ENCODE measurements at regions of chr19 and their contacts with region 1.

Region 1: DNA sequence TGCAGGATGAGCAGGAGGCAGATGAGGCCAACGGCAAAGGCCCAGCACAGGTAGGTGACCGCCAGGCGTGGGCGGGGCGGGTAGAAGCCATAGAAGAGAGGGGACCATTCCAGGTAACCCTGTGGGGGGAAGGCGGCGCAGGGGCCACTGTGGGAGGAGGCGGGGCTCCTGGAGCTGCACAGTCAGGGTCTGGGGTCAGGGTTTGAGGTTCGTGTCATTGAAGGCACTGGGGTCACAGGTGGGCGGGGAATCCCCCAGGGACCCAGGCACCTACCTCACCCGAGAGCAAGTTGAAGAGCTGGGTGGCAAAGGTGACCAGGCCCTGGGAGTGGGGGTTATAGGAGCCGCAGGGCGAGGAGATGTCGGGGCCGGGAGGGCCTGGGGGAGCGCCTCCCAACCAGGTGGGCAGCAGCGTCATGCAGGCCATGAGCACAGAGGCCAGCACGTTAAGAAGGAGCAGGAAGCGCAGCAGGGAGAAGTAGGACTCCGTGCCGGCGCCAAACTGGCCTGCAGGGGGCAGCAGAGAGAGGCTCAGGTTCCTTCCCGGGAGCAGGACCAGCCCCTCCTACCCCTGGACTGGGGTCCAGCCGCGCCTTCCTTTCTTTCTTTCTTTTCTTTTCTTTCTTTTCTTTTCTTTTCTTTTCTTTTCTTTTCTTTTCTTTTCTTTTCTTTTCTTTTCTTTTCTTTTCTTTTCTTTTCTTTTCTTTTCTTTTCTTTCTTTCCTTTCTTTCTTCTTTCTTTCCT is 4.6 kb downstream of the TMC4 start:
- DNase-seq: peak; percentile 79 to 97 (median 90)
- ATAC-seq: peak; percentile 83
- H3K4me3 ChIP-seq: no peak overlapping the region
- H3K4me3 Mint-ChIP-seq: no peak overlapping the region
- H3K27ac ChIP-seq: no peak overlapping the region
- H3K27ac Mint-ChIP-seq: no peak overlapping the region
- H3K4me1 ChIP-seq: peaks cover 34% of the 10 kb centered on the region
- H3K4me1 Mint-ChIP-seq: peaks cover 12% of the 10 kb centered on the region
- H3K27me3 ChIP-seq: no peaks in the 10 kb centered on the region
- H3K27me3 Mint-ChIP-seq: no peaks in the 10 kb centered on the region
- CTCF ChIP-seq: peak; percentile 80

Region 2: DNA sequence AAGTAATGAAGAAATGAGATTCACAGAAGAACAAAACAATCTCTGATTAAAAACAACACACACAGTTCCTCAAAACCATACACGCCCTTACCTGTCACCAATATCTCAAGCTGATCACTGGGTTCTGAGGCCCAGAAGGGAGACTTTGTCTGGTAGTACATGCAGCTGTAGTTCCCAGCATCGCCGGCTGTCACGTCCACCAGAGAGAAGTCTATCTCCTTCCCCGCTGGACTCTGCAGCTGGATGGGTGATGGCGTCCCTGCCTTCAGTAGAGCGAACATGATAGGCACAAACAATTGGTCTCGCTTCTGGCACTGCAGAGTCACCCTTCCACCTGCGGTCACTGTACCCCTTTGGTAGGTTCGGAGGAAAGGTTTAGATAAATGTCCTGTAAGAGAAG is 94.5 kb before region 1 on chr19:
- CTCF ChIA-PET with region 1: no interaction called
- POLR2A ChIA-PET with region 1: no interaction called
- intact Hi-C with region 1: no loop called
- DNase-seq: no peak
- ATAC-seq: no peak
- H3K4me3 ChIP-seq: no peak overlapping the region
- H3K4me3 Mint-ChIP-seq: no peak overlapping the region
- H3K27ac ChIP-seq: no peak overlapping the region
- H3K27ac Mint-ChIP-seq: no peak overlapping the region
- H3K4me1 ChIP-seq: no peaks in the 10 kb centered on the region
- H3K4me1 Mint-ChIP-seq: no peaks in the 10 kb centered on the region
- H3K27me3 ChIP-seq: no peaks in the 10 kb centered on the region
- H3K27me3 Mint-ChIP-seq: peaks cover 9% of the 10 kb centered on the region
- CTCF ChIP-seq: no peak

Region 3: DNA sequence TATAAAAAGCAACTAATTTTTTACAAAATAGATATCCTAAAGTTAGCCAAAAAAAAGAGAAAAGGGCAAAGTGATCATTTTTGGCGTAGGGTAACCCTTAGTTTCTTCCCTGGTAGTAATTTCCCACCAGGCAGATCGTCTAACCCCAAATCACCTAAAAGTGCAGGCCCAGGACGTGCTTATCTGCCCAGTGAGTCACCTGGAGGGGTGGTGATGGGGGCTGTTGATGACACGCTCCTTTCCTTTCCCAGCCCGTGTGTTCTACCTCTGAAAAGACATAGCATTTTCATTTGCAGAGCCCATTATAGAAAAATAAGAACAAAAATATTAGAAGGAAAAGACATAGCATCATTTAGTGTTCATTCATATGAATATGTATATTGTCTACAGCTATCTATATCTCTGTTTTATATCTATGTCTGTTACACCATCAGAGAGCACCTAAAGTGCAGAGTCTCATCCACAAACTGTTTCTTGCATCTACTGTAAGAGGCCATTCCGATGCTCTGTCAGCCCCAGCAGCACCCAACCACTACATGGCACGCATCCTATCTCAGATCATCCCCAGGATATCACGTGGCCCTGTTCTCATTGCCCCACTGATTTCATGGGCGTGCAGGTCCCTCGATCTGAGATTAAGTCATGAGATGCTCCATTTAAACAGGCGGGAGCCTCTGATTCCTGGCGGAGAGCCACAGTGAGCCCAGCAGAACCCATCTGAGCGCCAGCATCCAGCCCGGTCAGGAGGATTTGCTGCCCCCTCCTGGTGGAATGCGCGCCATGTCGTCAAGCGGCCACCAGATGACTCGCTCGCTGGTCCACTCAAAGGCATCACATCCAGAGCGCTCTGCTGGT is 63.0 kb after region 1 on chr19:
- CTCF ChIA-PET with region 1: interaction called, 6 read pairs
- POLR2A ChIA-PET with region 1: no interaction called
- intact Hi-C with region 1: loop called (anchors 1 kb)
- DNase-seq: peak; percentile 73 to 93 (median 86)
- ATAC-seq: peak; percentile 99
- H3K4me3 ChIP-seq: no peak overlapping the region
- H3K4me3 Mint-ChIP-seq: no peak overlapping the region
- H3K27ac ChIP-seq: no peak overlapping the region
- H3K27ac Mint-ChIP-seq: no peak overlapping the region
- H3K4me1 ChIP-seq: peaks cover 5% of the 10 kb centered on the region
- H3K4me1 Mint-ChIP-seq: peaks cover 4% of the 10 kb centered on the region
- H3K27me3 ChIP-seq: peaks cover 11 to 20% of the 10 kb centered on the region in 2 experiments
- H3K27me3 Mint-ChIP-seq: peaks cover 40% of the 10 kb centered on the region
- CTCF ChIP-seq: peak; percentile 84

Region 4: GRCh38 chr19:54266133-54266532 is 97.8 kb after region 1 on chr19:
- CTCF ChIA-PET with region 1: no interaction called
- POLR2A ChIA-PET with region 1: no interaction called
- intact Hi-C with region 1: loop called in 1 of 2 experiments (anchors 1 kb)
- DNase-seq: peak; percentile 42 to 76 (median 52)
- ATAC-seq: peak; percentile 59
- H3K4me3 ChIP-seq: no peak overlapping the region
- H3K4me3 Mint-ChIP-seq: no peak overlapping the region
- H3K27ac ChIP-seq: no peak overlapping the region
- H3K27ac Mint-ChIP-seq: no peak overlapping the region
- H3K4me1 ChIP-seq: no peaks in the 10 kb centered on the region
- H3K4me1 Mint-ChIP-seq: no peaks in the 10 kb centered on the region
- H3K27me3 ChIP-seq: no peaks in the 10 kb centered on the region
- H3K27me3 Mint-ChIP-seq: peaks cover 20% of the 10 kb centered on the region
- CTCF ChIP-seq: peak; percentile 74

Region 5: DNA sequence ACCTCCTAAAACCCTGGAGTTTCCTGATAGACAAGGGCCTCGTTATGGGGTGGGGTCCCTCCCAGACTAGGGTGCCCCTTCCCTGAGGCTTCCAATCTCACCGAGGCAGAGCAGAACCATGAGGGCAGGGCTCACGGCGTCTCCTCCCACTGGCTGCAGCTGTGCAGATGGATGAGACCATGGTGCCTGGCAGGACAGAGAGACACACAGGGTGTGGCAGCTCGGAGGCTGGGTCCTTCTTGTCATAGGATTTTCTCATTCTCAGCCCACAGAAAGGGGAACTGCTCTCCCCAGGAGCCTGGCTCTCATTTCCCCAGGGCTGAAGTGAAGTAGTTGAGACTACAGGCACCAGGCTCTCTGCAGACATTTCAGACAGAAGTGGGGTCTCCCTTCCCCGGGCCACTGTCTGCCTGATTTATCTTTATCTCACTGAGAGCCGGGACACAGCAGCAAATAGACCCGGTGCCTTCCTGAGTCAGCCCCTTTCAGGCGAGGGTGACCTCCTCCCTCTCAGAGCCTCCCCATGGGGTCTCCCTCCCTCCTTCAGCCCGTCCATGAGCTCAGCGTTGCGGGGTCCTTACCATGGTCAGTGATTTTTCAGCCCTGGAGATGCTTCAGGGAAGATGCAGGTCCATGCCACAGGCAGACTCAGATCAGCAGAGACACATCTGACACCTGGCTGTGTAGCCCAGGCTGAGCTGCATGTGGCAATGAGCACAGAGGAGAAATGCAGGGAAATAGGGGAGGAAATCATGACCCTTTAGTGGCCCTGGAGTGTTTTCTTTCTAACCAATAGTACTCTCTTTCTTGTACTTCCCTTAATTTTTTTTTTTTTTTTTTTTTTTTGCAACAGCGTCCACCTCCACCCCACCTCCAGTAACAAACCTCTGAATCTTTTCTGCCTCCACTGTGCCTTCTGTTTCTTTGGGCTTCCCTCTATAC is 144.4 kb after region 1 on chr19 and contains the start of gene LILRA5:
- CTCF ChIA-PET with region 1: no interaction called
- POLR2A ChIA-PET with region 1: no interaction called
- intact Hi-C with region 1: no loop called
- DNase-seq: peak in 3 of 14 experiments; percentile 18 to 59 (median 47)
- ATAC-seq: no peak
- H3K4me3 ChIP-seq: no peak within 1 kb of the TSS
- H3K4me3 Mint-ChIP-seq: no peak within 1 kb of the TSS
- H3K27ac ChIP-seq: no peak within 1 kb of the TSS
- H3K27ac Mint-ChIP-seq: no peak within 1 kb of the TSS
- H3K4me1 ChIP-seq: peaks cover 6% of the 10 kb centered on the region
- H3K4me1 Mint-ChIP-seq: no peaks in the 10 kb centered on the region
- H3K27me3 ChIP-seq: peaks cover 13 to 27% of the 10 kb centered on the region in 2 experiments
- H3K27me3 Mint-ChIP-seq: peaks cover 32% of the 10 kb centered on the region
- CTCF ChIP-seq: no peak
- total RNA-seq, gene LILRA5: 1.5 TPM

Measured in CD4-positive, alpha-beta T cell (primary cell).